GM12878 (cell line): ENCODE measurements at regions of chr19 and their contacts with region 1.

Region 1: GRCh38 chr19:13731147-13731964 is 33.0 kb upstream of the MRI1 start:
- DNase-seq: peak; percentile 72
- ATAC-seq: peak; percentile 100
- H3K4me3 ChIP-seq: peak overlapping the region; percentile 77
- H3K27ac ChIP-seq: peak overlapping the region; percentile 81
- H3K4me1 ChIP-seq: peaks cover 15% of the 10 kb centered on the region
- H3K27me3 ChIP-seq: no peaks in the 10 kb centered on the region
- CTCF ChIP-seq: no peak
- EP300 ChIP-seq: peak; percentile 62 to 84; a peak in 3 of 4 replicates
- POLR2A ChIP-seq: peak; percentile 80
- RAD21 ChIP-seq: no peak

Region 2: GRCh38 chr19:13604902-13605586 is 126.3 kb before region 1 on chr19:
- CTCF ChIA-PET with region 1: no interaction called
- POLR2A ChIA-PET with region 1: no interaction called
- RAD21 ChIA-PET with region 1: no interaction called
- SMC1A ChIA-PET with region 1: no interaction called
- in situ Hi-C with region 1: loop called (anchors 10 kb)
- intact Hi-C with region 1: no loop called
- DNase-seq: no peak
- ATAC-seq: no peak
- H3K4me3 ChIP-seq: no peak overlapping the region
- H3K27ac ChIP-seq: no peak overlapping the region
- H3K4me1 ChIP-seq: no peaks in the 10 kb centered on the region
- H3K27me3 ChIP-seq: no peaks in the 10 kb centered on the region
- CTCF ChIP-seq: no peak
- EP300 ChIP-seq: no peak
- POLR2A ChIP-seq: no peak
- RAD21 ChIP-seq: no peak

Region 3: GRCh38 chr19:13718733-13719132 is 12.6 kb before region 1 on chr19:
- CTCF ChIA-PET with region 1: interaction called, 28 read pairs
- POLR2A ChIA-PET with region 1: no interaction called
- RAD21 ChIA-PET with region 1: interaction called, 5 read pairs
- SMC1A ChIA-PET with region 1: interaction called, 7 read pairs
- in situ Hi-C with region 1: no loop called
- intact Hi-C with region 1: no loop called
- DNase-seq: no peak
- ATAC-seq: no peak
- H3K4me3 ChIP-seq: no peak overlapping the region
- H3K27ac ChIP-seq: no peak overlapping the region
- H3K4me1 ChIP-seq: no peaks in the 10 kb centered on the region
- H3K27me3 ChIP-seq: no peaks in the 10 kb centered on the region
- CTCF ChIP-seq: no peak
- EP300 ChIP-seq: no peak
- POLR2A ChIP-seq: no peak
- RAD21 ChIP-seq: peak; percentile 23; the same call in 1 of the 2 replicates

Region 4: GRCh38 chr19:13756210-13756609 is 24.9 kb after region 1 on chr19:
- CTCF ChIA-PET with region 1: no interaction called
- POLR2A ChIA-PET with region 1: no interaction called
- RAD21 ChIA-PET with region 1: no interaction called
- SMC1A ChIA-PET with region 1: no interaction called
- in situ Hi-C with region 1: no loop called
- intact Hi-C with region 1: no loop called
- DNase-seq: no peak
- ATAC-seq: no peak
- H3K4me3 ChIP-seq: no peak overlapping the region
- H3K27ac ChIP-seq: no peak overlapping the region
- H3K4me1 ChIP-seq: no peaks in the 10 kb centered on the region; the same call in 1 of the 2 replicates
- H3K27me3 ChIP-seq: no peaks in the 10 kb centered on the region
- CTCF ChIP-seq: no peak
- EP300 ChIP-seq: no peak
- POLR2A ChIP-seq: no peak
- RAD21 ChIP-seq: no peak